ENCODE measurements at regions of chr16 and their contacts with region 1.

Region 1: GRCh38 chr16:17459530-17460521 is 10.9 kb downstream of the XYLT1 start:
- DNase-seq: peak; percentile 92
- H3K4me3 ChIP-seq: peak overlapping the region; percentile 59
- H3K27ac ChIP-seq: peak overlapping the region; percentile 94
- H3K4me1 ChIP-seq: peaks cover 74% of the 10 kb centered on the region
- CTCF ChIP-seq: no peak

Region 2: DNA sequence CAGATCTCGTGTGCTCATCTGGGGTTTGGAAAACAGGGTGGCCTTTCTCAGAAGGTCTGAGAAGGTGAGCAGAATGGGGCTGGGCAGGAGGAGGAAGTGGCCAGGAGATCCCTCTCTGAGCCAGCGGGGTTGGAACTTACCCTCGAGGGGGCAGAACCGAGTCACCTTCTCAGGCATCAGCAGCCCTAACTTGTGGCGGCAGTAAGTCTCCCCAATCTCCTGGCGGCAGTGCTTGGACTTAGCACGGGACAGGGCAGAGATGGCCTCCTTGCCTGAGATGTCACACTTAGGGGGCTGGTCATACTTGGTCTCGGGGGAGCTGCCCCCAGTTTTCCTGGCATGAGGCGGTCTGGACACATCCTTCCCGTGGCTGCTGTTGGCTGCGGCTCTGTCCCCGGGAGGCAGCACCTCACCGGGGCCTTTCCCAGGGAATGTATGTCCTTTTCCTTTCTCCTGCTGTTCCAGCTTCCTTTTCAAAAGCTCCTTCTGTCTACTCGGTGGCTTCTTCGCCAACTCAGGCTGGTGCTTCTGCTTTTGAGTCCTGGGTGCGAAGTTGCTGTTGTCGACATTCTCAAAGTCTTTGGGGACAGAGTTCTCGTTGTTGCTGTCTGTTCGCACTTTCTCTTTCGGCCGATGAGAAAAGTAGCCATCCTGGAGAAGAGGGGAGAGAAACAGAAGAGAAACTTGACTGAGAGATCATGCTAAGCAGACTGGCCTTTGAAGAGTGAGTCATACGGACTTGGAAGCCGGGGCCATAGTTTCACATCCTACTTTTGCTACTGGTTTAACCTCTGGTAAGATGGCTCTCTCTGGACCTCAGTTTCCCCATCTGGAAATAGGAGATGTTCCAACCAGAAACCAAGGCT is 200.7 kb before region 1 on chr16:
- CTCF ChIA-PET with region 1: no interaction called
- POLR2A ChIA-PET with region 1: interaction called, 3 read pairs
- intact Hi-C with region 1: loop called (anchors 5 kb)
- DNase-seq: peak; percentile 64
- H3K4me3 ChIP-seq: peak overlapping the region; percentile 10
- H3K27ac ChIP-seq: peak overlapping the region; percentile 50
- H3K4me1 ChIP-seq: peaks cover 33% of the 10 kb centered on the region
- CTCF ChIP-seq: peak; percentile 66

Region 3: DNA sequence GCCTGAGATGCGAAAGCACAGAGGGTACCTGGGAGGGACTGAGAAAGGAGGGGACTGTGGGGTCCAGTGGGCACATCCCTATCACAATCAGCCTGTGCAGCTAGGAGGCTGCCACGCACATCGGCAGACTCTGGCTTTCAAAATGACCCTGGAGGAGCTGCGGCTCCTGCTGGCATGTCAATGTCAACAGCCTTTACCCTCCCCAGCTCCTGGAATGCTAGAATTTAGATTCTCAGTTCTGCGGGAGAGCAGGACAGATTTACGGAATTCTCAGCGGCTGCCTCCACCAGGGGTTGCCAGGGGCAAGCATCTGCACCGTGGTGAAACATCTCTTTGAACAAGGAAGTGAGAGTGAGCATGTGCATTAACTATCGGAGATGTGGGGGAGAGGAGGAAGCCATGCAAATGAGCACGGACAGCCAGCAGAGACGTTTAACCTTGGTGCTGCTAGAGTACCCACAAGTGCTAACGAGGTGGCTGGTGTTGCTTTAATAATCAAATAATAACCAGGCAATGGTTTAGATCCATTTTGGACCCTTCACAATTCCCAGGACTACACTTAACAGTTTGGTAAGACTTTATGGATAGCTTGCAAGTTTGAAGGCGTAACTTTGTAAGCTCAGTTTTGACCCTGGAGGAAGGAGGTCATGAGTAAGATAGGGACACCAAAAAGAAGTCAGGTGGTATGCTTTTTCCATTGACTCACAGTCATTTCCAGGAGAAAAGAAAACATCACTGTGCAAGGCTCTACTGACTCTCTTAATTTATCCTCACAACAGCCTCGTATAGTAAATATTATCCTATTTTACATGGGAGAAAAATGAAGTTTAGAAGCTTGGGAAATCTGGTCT is 43.1 kb before region 1 on chr16:
- CTCF ChIA-PET with region 1: interaction called, 3 read pairs
- POLR2A ChIA-PET with region 1: interaction called, 16 read pairs
- intact Hi-C with region 1: loop called (anchors 1 kb)
- DNase-seq: peak; percentile 92
- H3K4me3 ChIP-seq: peak overlapping the region; percentile 64
- H3K27ac ChIP-seq: peak overlapping the region; percentile 87
- H3K4me1 ChIP-seq: peaks cover 50% of the 10 kb centered on the region
- CTCF ChIP-seq: peak; percentile 70

Region 4: DNA sequence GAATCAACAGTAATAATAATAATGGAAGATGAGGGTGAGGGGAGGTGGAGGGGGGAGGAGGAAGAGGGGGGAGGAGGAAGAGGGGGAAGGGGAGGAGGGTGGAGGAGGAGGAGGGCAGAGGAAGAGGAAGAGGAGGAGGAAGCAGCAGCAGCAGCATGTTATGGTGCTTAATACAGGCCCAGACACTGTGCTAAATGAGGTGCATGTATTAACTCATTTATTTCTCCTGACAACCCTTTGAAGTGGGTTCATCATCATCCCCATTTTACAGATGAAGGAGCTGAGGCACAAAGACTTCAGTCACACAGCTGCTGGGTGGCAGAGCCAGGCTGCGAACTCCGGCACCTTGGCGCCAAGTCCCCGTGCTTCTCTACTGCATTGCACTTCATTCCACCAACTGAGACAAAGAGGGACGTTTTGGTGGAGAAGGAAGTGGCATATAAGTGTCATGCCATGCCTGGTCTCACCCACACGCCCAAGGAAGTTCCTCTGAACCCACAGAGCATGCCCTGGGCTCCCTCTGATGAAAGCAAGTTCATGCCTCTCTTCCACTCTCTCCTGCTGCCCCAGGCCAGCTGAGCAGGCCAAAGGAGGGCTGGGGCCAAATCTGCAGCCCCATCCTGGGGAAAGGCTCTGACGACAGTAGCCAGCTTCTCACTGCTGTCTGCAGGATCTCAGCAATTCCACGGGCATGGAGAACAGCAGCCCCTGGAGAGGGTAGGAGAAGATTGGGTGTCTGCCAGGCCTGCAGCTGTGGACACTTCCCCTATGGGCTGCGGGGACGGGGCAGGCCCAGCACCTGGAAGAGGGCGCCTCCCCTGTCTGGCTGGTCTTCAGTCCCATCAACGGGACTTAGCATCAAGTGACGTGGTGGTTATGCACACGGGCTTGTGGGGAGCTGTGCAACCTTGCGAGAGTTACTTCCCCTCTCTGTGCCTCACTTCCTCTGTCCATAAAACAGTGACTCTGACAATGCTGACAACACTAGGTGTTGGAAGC is 10.9 kb before region 1 on chr16:
- CTCF ChIA-PET with region 1: no interaction called
- POLR2A ChIA-PET with region 1: interaction called, 4 read pairs
- intact Hi-C with region 1: loop called (anchors 1 kb)
- DNase-seq: peak; percentile 51
- H3K4me3 ChIP-seq: peak overlapping the region; percentile 29
- H3K27ac ChIP-seq: peak overlapping the region; percentile 70
- H3K4me1 ChIP-seq: peaks cover 40% of the 10 kb centered on the region
- CTCF ChIP-seq: 0 out of 2 replicates have a peak, but pooled peaks have one; percentile 21

Measured in OCI-LY7 (cell line).